Mammary epithelial cell (primary cell): ENCODE measurements at regions of chr15 and their contacts with region 1.

Region 1: GRCh38 chr15:71048913-71049675 is 66.2 kb upstream of the THSD4 start:
- DNase-seq: peak; percentile 87
- H3K4me3 ChIP-seq: no peak overlapping the region
- H3K27ac ChIP-seq: peak overlapping the region; percentile 96
- H3K4me1 ChIP-seq: peaks cover 63% of the 10 kb centered on the region
- H3K27me3 ChIP-seq: no peaks in the 10 kb centered on the region
- CTCF ChIP-seq: no peak

Region 2: DNA sequence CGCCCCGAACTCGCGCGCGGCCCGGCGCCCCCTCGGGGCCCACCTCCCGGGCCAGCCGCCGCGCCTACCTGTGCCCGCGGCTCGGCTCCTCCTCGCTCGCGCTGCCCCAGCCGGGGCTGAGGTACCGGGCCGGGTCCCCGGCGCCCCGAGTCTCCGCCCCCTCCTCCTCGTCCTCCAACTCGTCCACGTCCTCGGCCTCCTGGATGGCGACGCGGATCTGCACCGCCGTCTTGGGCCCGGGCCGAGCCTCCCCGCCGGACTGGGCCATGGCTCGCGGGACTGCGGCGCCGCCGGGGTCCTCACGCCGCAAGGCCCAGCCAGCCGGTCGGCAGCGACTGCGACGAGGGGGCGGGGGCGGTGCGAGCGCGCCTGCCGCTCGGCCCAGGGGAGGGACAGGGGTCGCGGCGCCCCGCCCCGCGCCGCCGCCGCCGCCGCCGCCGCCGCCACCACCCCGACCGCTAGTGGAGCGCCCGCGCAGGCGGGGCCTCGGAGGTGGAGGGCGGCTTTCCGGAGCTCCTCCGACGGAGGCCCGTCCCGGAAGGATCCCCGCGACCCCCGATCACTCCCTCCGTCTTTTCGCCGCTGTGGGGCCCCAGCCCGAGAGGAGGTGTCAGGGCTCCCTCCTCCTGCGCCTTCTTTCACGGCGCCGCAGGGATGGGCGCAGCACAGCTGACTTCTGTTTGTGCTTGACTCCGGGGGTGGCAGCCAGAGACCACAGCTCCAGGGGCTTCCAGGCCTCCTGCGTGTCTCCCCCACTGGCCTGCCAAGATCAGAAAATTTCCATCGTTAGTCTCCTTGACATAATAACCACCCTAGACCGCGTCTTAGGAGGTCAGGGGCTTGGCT is 195.1 kb before region 1 on chr15 and contains the start of gene LARP6:
- CTCF ChIA-PET with region 1: no interaction called
- dilution Hi-C with region 1: no loop called
- in situ Hi-C with region 1: no loop called
- intact Hi-C with region 1: loop called (anchors 10 kb)
- DNase-seq: peak; percentile 22
- H3K4me3 ChIP-seq: peak within 1 kb of the TSS; percentile 66 to 87 (median 83)
- H3K27ac ChIP-seq: peak within 1 kb of the TSS; percentile 83
- H3K4me1 ChIP-seq: peaks cover 36% of the 10 kb centered on the region
- H3K27me3 ChIP-seq: no peaks in the 10 kb centered on the region
- CTCF ChIP-seq: no peak
- total RNA-seq, gene LARP6: 37.5 to 77.3 TPM

Region 3: GRCh38 chr15:70974004-70974832 is 74.9 kb before region 1 on chr15:
- CTCF ChIA-PET with region 1: no interaction called
- dilution Hi-C with region 1: no loop called
- in situ Hi-C with region 1: no loop called
- intact Hi-C with region 1: loop called (anchors 5 kb)
- DNase-seq: peak; percentile 36
- H3K4me3 ChIP-seq: no peak overlapping the region
- H3K27ac ChIP-seq: no peak overlapping the region
- H3K4me1 ChIP-seq: no peaks in the 10 kb centered on the region
- H3K27me3 ChIP-seq: no peaks in the 10 kb centered on the region
- CTCF ChIP-seq: peak; percentile 16 to 49

Region 4: DNA sequence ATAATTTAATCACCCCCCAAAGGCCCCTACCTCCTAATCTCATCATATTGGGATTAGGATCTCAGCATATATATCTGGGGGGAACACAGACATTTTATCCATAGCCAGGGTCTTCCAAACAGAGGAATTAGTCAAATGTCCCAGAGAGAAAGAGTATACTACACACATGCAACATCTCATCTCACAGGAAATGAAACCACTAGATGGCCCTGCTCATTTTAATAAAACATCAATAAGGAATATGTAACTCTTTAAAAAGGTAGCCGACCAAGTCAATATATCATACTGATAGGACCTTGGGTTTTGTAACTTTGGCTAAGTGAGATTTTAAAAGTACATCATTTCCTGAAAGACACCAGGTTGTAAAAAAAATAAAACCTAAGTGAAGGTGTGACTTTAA is 20.6 kb after region 1 on chr15:
- CTCF ChIA-PET with region 1: no interaction called
- dilution Hi-C with region 1: no loop called
- in situ Hi-C with region 1: no loop called
- intact Hi-C with region 1: loop called (anchors 2 kb)
- DNase-seq: no peak
- H3K4me3 ChIP-seq: no peak overlapping the region
- H3K27ac ChIP-seq: no peak overlapping the region
- H3K4me1 ChIP-seq: peaks cover 19% of the 10 kb centered on the region
- H3K27me3 ChIP-seq: no peaks in the 10 kb centered on the region
- CTCF ChIP-seq: no peak

Region 5: GRCh38 chr15:71114896-71115554 is 65.9 kb after region 1 on chr15 and contains the start of gene THSD4:
- CTCF ChIA-PET with region 1: no interaction called
- dilution Hi-C with region 1: no loop called
- in situ Hi-C with region 1: no loop called
- intact Hi-C with region 1: loop called (anchors 2 kb)
- DNase-seq: peak; percentile 66
- H3K4me3 ChIP-seq: peak within 1 kb of the TSS; percentile 71 to 75 (median 75)
- H3K27ac ChIP-seq: peak within 1 kb of the TSS; percentile 90
- H3K4me1 ChIP-seq: peaks cover 31% of the 10 kb centered on the region
- H3K27me3 ChIP-seq: no peaks in the 10 kb centered on the region
- CTCF ChIP-seq: peak; percentile 87 to 99
- total RNA-seq, gene THSD4: 87.7 to 111 TPM